HEK293 (cell line): ENCODE measurements at regions of chr9 and their contacts with region 1.

Region 1: DNA sequence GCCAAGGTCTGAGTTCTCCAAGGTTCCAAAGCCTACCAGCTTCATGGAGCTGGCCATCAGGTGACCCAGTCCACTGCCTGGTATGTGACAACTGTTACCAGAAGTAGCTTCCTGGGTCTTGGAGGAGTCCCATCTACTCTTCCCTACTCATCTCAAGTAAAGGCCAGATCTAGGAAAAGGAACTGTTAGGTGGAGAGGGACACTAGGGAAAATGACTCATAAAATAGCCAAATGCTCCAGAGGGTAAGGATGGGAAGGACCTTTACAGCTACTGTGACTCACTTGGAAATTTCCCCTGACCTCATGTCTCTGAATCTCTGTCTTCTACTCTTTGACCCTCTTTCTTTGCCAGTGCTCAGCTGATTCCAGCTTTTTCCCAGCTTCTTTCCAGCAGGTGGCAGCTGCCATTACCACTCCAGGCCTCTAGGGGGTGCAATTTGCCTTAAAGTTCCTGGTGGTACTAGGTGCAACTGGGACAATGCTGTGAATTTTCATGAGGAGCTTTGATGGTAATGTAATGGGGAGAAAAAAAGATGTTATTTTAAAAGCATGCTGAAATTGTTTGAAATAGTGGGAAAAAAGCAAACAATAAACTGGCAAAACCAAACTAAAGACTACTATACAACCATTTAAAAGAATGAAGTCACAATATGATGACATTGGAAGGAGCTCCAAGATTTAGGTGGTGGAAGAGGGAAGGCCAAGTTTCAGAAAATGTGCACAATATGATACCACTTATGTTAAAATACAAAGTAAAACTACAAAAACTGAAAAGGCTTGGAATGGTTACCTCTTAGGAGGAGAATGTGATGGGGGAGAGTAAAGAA is 27.1 kb upstream of the MYORG start:
- H3K4me3 ChIP-seq: no peak overlapping the region
- H3K27ac ChIP-seq: no peak overlapping the region
- H3K4me1 ChIP-seq: no peaks in the 10 kb centered on the region
- CTCF ChIP-seq: peak; percentile 65

Region 2: GRCh38 chr9:34384368-34385165 is 19.2 kb before region 1 on chr9:
- CTCF ChIA-PET with region 1: interaction called, 23 read pairs
- POLR2A ChIA-PET with region 1: no interaction called
- H3K4me3 ChIP-seq: no peak overlapping the region
- H3K27ac ChIP-seq: no peak overlapping the region
- H3K4me1 ChIP-seq: no peaks in the 10 kb centered on the region
- CTCF ChIP-seq: no peak

Region 3: GRCh38 chr9:34446468-34446891 is 42.7 kb after region 1 on chr9:
- CTCF ChIA-PET with region 1: interaction called, 16 read pairs
- POLR2A ChIA-PET with region 1: no interaction called
- H3K4me3 ChIP-seq: no peak overlapping the region
- H3K27ac ChIP-seq: no peak overlapping the region
- H3K4me1 ChIP-seq: no peaks in the 10 kb centered on the region
- CTCF ChIP-seq: no peak

Region 4: GRCh38 chr9:34500623-34501267 is 97.0 kb after region 1 on chr9:
- CTCF ChIA-PET with region 1: interaction called, 132 read pairs
- POLR2A ChIA-PET with region 1: no interaction called
- H3K4me3 ChIP-seq: no peak overlapping the region
- H3K27ac ChIP-seq: no peak overlapping the region
- H3K4me1 ChIP-seq: no peaks in the 10 kb centered on the region
- CTCF ChIP-seq: peak; percentile 58

Region 5: DNA sequence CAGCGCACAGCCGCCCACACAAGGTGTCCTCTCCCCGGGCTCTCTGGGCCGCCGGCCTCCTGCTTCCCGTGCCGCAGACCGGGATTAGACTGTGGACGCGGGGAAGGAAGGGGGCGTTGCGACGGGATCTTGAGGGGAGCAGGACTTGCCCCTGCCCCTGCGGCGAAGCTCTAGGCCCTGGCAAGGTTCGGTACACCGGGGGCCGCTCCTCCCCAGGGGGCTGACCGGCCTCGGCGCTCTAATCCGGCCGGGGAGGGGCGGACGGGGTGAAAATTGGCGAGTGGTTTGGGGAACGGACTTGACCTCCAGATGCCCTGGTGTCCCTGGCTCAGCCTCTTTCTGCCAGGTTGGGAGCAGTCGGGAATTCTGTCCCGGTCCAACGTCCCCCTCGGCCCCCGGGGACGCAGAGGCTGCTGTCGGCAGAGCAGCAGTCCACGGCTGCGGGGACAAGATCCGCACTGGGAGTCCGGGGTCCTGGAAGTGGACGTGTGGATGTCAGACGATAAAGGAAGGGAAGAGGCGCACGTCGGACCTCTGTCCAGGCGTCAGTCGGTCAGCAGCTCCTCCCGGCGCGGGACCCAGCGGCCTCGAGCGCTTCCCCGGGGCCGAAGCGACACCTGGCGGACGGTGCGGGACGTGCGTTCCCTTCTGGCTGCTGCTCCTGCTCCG is 187.6 kb after region 1 on chr9:
- CTCF ChIA-PET with region 1: interaction called, 32 read pairs
- POLR2A ChIA-PET with region 1: no interaction called
- H3K4me3 ChIP-seq: no peak overlapping the region
- H3K27ac ChIP-seq: no peak overlapping the region
- H3K4me1 ChIP-seq: no peaks in the 10 kb centered on the region
- CTCF ChIP-seq: peak; percentile 90